Dendritic cell treated with granulocyte-macrophage colony-stimulating factor and Interleukin-4, amounts not matched to agents 40 ng/mL and 50 ng/mL, for 4 days (primary cell): ENCODE measurements at regions of chr11 and their contacts with region 1.

Region 1: GRCh38 chr11:31240338-31240904 is 129.1 kb downstream of the DCDC1 start:
- H3K4me3 Mint-ChIP-seq: no peak overlapping the region
- H3K27ac Mint-ChIP-seq: no peak overlapping the region
- H3K4me1 Mint-ChIP-seq: no peaks in the 10 kb centered on the region
- H3K27me3 Mint-ChIP-seq: peaks cover 4% of the 10 kb centered on the region

Region 2: DNA sequence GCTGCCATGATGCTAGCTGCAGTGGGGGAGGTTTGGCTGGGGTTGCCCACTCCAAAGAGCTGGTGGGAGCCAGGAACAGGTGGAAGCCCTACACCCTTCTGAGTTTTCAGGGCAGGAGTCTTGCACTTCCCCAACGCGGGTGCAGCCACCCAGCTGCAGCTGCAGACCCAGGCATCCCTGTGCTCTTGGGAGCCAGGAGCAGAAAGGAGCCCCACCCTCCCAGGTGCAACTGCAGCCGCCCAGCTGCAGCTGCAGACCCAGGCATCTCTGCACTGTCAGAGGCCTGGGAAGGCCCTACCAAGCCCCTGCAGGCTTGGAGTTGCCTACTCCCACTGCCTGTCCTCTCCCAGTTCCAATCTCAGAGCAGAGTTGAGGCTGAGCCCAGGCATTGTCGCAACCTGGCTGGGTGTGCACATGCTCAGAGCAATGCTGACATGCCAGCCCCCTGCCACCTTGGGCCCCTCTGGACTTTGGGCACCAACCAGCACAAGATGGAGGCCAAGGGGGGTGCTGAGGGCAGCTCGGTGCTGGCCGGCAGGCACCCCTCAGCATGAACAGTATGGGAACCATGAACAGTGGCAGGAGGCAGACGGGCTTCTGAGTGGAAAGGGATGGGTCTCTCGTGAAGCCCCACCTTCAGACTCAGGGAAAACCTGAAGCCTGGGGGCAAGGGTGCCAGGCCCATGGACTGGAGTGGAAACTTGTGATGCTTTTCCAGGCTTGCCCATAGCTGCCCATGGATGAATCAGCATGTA is 66.3 kb before region 1 on chr11:
- intact Hi-C with region 1: no loop called
- H3K4me3 Mint-ChIP-seq: no peak overlapping the region
- H3K27ac Mint-ChIP-seq: no peak overlapping the region
- H3K4me1 Mint-ChIP-seq: no peaks in the 10 kb centered on the region
- H3K27me3 Mint-ChIP-seq: no peaks in the 10 kb centered on the region

Region 3: GRCh38 chr11:31214372-31214771 is 26.0 kb before region 1 on chr11:
- intact Hi-C with region 1: no loop called
- H3K4me3 Mint-ChIP-seq: no peak overlapping the region
- H3K27ac Mint-ChIP-seq: no peak overlapping the region
- H3K4me1 Mint-ChIP-seq: no peaks in the 10 kb centered on the region
- H3K27me3 Mint-ChIP-seq: no peaks in the 10 kb centered on the region

Region 4: GRCh38 chr11:31295308-31295707 is 54.9 kb after region 1 on chr11:
- intact Hi-C with region 1: no loop called
- H3K4me3 Mint-ChIP-seq: no peak overlapping the region
- H3K27ac Mint-ChIP-seq: no peak overlapping the region
- H3K4me1 Mint-ChIP-seq: no peaks in the 10 kb centered on the region
- H3K27me3 Mint-ChIP-seq: peaks cover 1% of the 10 kb centered on the region

Region 5: GRCh38 chr11:31442086-31442485 is 201.7 kb after region 1 on chr11:
- intact Hi-C with region 1: no loop called
- H3K4me3 Mint-ChIP-seq: no peak overlapping the region
- H3K27ac Mint-ChIP-seq: no peak overlapping the region
- H3K4me1 Mint-ChIP-seq: no peaks in the 10 kb centered on the region
- H3K27me3 Mint-ChIP-seq: no peaks in the 10 kb centered on the region

Region 6: GRCh38 chr11:31870609-31871309 is 630.3 kb after region 1 on chr11:
- intact Hi-C with region 1: loop called (anchors 2 kb)
- H3K4me3 Mint-ChIP-seq: no peak overlapping the region
- H3K27ac Mint-ChIP-seq: no peak overlapping the region
- H3K4me1 Mint-ChIP-seq: no peaks in the 10 kb centered on the region
- H3K27me3 Mint-ChIP-seq: peaks cover 16% of the 10 kb centered on the region

Region 7: DNA sequence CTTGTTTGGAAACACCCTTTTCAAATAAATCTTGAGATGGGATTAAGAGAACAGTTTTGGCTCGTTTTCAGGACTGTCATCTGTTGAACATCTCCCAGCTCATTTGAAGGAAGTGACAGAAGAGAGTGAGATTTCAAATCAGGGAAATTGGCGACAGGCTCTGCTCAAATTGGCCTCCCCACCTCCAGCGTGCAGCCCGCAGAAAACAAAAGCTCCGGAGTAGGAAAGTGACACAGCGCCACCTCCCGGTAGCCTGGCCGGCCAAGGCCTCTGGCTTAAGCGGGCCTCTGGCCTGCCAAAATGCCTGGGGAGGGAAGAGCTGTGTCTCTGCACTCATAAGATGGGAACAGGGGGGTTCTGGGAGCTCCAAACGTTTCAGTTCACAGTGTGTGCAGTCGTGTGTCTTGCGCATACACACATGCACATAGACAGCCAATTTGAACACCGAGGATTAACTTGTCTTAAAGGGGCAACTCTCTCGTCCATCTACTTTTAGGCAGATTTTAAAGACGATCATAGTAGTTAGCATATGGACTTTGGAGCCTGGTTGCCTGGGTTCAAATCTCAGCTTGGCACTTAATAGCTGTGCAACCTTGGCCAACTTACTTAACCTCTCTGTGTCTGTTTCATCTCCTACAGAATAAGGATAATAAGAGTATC is 717.8 kb after region 1 on chr11:
- intact Hi-C with region 1: loop called (anchors 5 kb)
- H3K4me3 Mint-ChIP-seq: no peak overlapping the region
- H3K27ac Mint-ChIP-seq: no peak overlapping the region
- H3K4me1 Mint-ChIP-seq: no peaks in the 10 kb centered on the region
- H3K27me3 Mint-ChIP-seq: peaks cover 6% of the 10 kb centered on the region

Region 8: GRCh38 chr11:32006799-32007388 is 766.5 kb after region 1 on chr11:
- intact Hi-C with region 1: loop called (anchors 5 kb)
- H3K4me3 Mint-ChIP-seq: no peak overlapping the region
- H3K27ac Mint-ChIP-seq: no peak overlapping the region
- H3K4me1 Mint-ChIP-seq: no peaks in the 10 kb centered on the region
- H3K27me3 Mint-ChIP-seq: peaks cover 14% of the 10 kb centered on the region

Region 9: DNA sequence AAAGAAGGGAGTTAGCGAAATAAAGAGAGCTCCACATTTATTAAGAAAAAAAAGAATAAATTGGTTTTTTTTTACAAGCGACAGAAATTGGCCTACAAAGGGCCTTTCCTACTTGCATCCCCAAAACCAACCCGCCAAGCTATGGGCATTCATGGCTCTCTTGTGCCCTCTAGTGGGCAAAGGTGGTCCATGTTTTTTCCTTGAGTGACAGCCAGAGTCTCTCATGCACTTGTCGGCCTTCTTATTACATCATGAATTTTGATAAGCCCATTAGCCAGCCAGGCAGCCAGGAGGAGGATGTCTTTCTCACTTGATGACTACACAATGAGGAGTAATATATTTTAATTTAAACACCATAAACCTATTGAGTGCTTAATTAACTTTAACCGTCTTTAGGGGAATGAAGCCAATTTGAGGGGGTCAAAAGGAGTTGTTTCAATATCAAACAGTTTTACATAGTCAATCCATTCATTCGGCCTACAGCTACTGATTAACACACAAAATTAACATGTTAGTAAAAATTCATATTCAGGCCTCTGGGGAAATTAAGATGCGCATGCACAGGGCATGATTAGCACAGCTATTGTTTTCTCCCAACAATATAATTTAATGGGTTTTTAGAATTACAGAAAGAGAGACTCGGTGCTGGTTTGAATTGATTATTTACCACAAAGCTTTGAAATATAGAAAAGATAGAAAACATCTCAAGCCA is 936.0 kb after region 1 on chr11:
- intact Hi-C with region 1: loop called (anchors 10 kb)
- H3K4me3 Mint-ChIP-seq: no peak overlapping the region
- H3K27ac Mint-ChIP-seq: no peak overlapping the region
- H3K4me1 Mint-ChIP-seq: no peaks in the 10 kb centered on the region
- H3K27me3 Mint-ChIP-seq: peaks cover 10% of the 10 kb centered on the region